PC-9 (cell line): ENCODE measurements at regions of chr2 and their contacts with region 1.

Region 1: GRCh38 chr2:162478721-162479129 is 134.8 kb downstream of the GCA start:
- DNase-seq: peak; percentile 24 to 82
- H3K4me3 ChIP-seq: peak overlapping the region; percentile 42; the same call in 1 of the 2 replicates
- H3K27ac ChIP-seq: peak overlapping the region; percentile 72
- H3K4me1 ChIP-seq: peaks cover 34% of the 10 kb centered on the region
- H3K27me3 ChIP-seq: no peaks in the 10 kb centered on the region
- CTCF ChIP-seq: no peak

Region 2: DNA sequence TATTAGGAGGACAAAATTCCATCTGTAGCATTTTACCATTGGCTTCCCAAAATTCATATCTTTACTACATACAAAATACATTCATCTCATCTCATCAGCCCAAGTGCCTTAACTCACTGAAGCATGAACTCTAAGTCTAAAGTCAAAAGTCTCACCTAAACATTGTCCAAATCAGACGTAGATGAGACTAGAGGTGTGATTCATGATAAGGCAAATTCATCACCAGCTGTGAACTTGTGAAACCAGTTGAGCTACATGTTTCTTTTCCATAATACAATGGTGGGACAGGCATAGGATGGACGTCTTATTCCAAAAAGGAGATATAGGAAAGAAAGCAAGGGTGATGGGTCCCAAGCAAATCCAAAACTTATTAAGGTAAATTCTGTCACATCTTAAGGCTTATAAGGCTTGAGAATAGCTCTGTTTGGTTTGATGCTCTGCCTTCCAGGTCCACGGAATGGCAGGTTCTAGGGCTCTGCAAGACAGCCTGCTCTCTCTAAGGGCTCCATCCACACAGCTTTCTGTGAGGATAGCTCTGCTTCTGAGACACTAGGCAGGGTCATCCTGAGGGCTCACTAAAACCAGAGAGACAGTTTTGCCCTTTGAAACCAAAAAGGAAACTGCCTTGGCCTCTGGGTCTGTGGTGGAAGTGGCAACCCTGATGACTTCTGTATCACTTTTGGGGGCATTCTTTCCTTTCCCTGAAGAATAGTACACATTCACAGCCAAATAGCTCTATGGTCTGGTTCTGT is 169.8 kb before region 1 on chr2:
- CTCF ChIA-PET with region 1: no interaction called
- POLR2A ChIA-PET with region 1: no interaction called
- intact Hi-C with region 1: no loop called
- DNase-seq: peak in 1 of 2 experiments; percentile 57
- H3K4me3 ChIP-seq: no peak overlapping the region
- H3K27ac ChIP-seq: no peak overlapping the region
- H3K4me1 ChIP-seq: peaks cover 6% of the 10 kb centered on the region; the same call in 1 of the 2 replicates
- H3K27me3 ChIP-seq: no peaks in the 10 kb centered on the region
- CTCF ChIP-seq: no peak

Region 3: DNA sequence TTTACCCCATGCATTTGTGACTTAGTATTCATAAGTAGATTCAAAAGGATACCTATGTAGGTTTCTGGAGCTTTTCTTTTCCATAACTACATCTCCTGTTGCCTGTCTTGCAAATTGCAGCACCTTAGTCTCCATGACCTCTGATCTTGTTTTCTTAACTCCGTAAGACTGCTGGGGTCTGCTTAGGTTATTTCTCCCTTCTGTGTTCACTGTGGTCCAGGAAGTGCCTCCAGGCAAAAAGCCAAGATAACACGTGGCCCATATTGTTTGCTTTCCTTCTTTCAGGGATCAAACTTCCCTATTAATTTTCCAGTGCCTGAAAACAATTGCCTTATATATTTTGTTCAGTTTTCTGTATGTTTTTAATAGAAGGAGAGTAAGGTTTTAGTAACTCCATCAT is 48.4 kb before region 1 on chr2:
- CTCF ChIA-PET with region 1: no interaction called
- POLR2A ChIA-PET with region 1: no interaction called
- intact Hi-C with region 1: no loop called
- DNase-seq: peak in 1 of 2 experiments; percentile 0
- H3K4me3 ChIP-seq: no peak overlapping the region
- H3K27ac ChIP-seq: no peak overlapping the region
- H3K4me1 ChIP-seq: no peaks in the 10 kb centered on the region
- H3K27me3 ChIP-seq: no peaks in the 10 kb centered on the region
- CTCF ChIP-seq: no peak

Region 4: DNA sequence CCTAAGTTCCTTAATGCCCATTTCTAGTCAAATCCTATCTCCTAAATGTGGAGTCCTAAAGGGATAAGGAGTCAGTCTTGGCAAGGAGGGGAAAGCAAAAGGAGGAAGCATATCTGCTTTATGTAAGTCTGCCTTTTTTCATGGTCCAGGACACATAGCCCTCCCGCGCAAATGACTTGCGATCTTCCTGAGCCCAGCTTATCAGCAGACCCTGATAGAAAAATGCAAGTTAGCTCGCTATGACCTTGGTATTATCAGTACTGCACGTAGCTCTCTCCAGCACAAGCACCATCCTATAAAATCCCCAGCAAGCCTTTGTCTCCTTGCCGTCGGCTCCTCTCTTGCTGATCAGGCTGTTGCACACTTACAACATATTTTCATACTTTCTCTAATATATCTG is 641.2 kb after region 1 on chr2:
- CTCF ChIA-PET with region 1: interaction called, 12 read pairs
- POLR2A ChIA-PET with region 1: no interaction called
- intact Hi-C with region 1: no loop called
- DNase-seq: no peak
- H3K4me3 ChIP-seq: no peak overlapping the region
- H3K27ac ChIP-seq: no peak overlapping the region
- H3K4me1 ChIP-seq: no peaks in the 10 kb centered on the region
- H3K27me3 ChIP-seq: no peaks in the 10 kb centered on the region
- CTCF ChIP-seq: no peak